ENCODE measurements at regions of chr19 and their contacts with region 1.

Region 1: GRCh38 chr19:2702162-2703076 is at the start of gene GNG7:
- DNase-seq: peak; percentile 93
- H3K4me3 ChIP-seq: peak within 1 kb of the TSS; percentile 53 to 73
- H3K27ac ChIP-seq: peak within 1 kb of the TSS; percentile 40 to 50
- H3K4me1 ChIP-seq: peaks cover 6% of the 10 kb centered on the region
- H3K27me3 ChIP-seq: no peaks in the 10 kb centered on the region
- CTCF ChIP-seq: no peak
- POLR2A ChIP-seq: peak; percentile 60
- total RNA-seq, gene GNG7: 8.7 to 22.9 TPM

Region 2: GRCh38 chr19:2653710-2654707 is 48.4 kb before region 1 on chr19:
- intact Hi-C with region 1: loop called (anchors 5 kb)
- DNase-seq: no peak
- H3K4me3 ChIP-seq: no peak overlapping the region
- H3K27ac ChIP-seq: no peak overlapping the region
- H3K4me1 ChIP-seq: no peaks in the 10 kb centered on the region
- H3K27me3 ChIP-seq: no peaks in the 10 kb centered on the region
- CTCF ChIP-seq: no peak
- POLR2A ChIP-seq: no peak

Region 3: GRCh38 chr19:2775556-2776430 is 73.4 kb after region 1 on chr19:
- intact Hi-C with region 1: no loop called
- DNase-seq: no peak
- H3K4me3 ChIP-seq: no peak overlapping the region
- H3K27ac ChIP-seq: peak overlapping the region; percentile 9 to 38
- H3K4me1 ChIP-seq: no peaks in the 10 kb centered on the region
- H3K27me3 ChIP-seq: no peaks in the 10 kb centered on the region
- CTCF ChIP-seq: no peak
- POLR2A ChIP-seq: no peak

Region 4: GRCh38 chr19:2887391-2887914 is 185.0 kb after region 1 on chr19:
- intact Hi-C with region 1: no loop called
- DNase-seq: peak; percentile 39
- H3K4me3 ChIP-seq: no peak overlapping the region
- H3K27ac ChIP-seq: no peak overlapping the region
- H3K4me1 ChIP-seq: no peaks in the 10 kb centered on the region
- H3K27me3 ChIP-seq: no peaks in the 10 kb centered on the region
- CTCF ChIP-seq: peak; percentile 18 to 76 (median 62)
- POLR2A ChIP-seq: no peak

Measured in prostate gland (tissue), 2 donors.